Naive thymus-derived CD4-positive, alpha-beta T cell (primary cell): ENCODE measurements at regions of chr6 and their contacts with region 1.

Region 1: GRCh38 chr6:96521644-96522464 is at the start of gene UFL1:
- DNase-seq: peak; percentile 84 to 97 (median 93)
- ATAC-seq: peak; percentile 97
- H3K4me3 ChIP-seq: peak within 1 kb of the TSS; percentile 98
- H3K4me3 Mint-ChIP-seq: peak within 1 kb of the TSS; percentile 96 to 100 (median 98)
- H3K27ac ChIP-seq: peak within 1 kb of the TSS; percentile 98
- H3K27ac Mint-ChIP-seq: peak within 1 kb of the TSS; percentile 98 to 100 (median 100)
- H3K4me1 ChIP-seq: peaks cover 13 to 19% of the 10 kb centered on the region in 2 donors
- H3K4me1 Mint-ChIP-seq: peaks cover 11 to 49% (median 35%) of the 10 kb centered on the region in 7 donors
- H3K27me3 ChIP-seq: no peaks in the 10 kb centered on the region
- H3K27me3 Mint-ChIP-seq: no peaks in the 10 kb centered on the region
- total RNA-seq, gene UFL1: 15.0 to 34.9 (median 22.2) TPM

Region 2: DNA sequence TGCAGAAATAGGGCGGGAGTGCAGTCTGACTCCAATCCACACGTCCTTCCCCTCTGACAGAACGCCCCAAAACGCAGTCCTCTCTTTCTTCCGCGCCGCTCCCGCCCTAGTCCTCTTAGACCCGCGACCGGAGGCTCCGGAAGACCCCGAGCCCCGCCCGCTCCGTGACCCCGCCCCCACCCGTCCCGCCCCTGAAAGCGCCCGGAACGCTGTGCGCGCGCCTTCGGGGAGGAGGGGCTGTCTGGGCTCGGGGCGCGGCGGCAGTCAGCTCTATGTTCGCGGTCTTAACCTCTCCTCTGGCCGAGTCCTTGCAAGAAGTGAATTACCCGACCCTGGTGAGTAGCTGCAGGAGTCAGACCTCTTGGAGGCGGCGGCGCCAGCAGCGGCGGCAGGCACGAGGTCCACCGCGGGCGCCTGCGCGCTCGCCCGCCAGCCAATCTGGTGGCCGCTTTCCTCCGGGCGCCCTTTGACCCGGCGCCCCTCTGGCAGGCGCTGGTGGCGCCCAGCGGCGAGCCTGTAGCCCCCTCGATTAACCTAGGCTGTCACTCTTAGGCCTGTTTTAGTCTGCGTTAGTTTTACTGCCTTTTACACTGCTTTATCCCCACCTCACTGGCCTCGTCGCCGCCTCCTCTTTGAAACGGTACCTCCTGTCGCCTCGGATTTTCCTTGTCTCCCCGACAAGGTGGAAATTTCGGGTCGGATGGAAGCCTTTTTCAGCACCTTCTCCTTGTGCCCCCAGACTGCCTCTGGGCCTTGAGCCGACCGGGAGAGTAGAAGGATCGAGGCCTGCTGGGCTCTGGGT is 944.3 kb before region 1 on chr6 and contains the start of gene MANEA:
- CTCF ChIA-PET with region 1: no interaction called
- POLR2A ChIA-PET with region 1: interaction called, 5 read pairs
- intact Hi-C with region 1: loop called (anchors 1 kb)
- DNase-seq: peak; percentile 64 to 83 (median 79)
- ATAC-seq: peak; percentile 91
- H3K4me3 ChIP-seq: peak within 1 kb of the TSS; percentile 98
- H3K4me3 Mint-ChIP-seq: peak within 1 kb of the TSS; percentile 83 to 98 (median 96)
- H3K27ac ChIP-seq: peak within 1 kb of the TSS; percentile 80
- H3K27ac Mint-ChIP-seq: peak within 1 kb of the TSS; percentile 92 to 100 (median 97)
- H3K4me1 ChIP-seq: peaks cover 9 to 30% of the 10 kb centered on the region in 2 donors
- H3K4me1 Mint-ChIP-seq: peaks cover 28 to 71% (median 62%) of the 10 kb centered on the region in 7 donors
- H3K27me3 ChIP-seq: no peaks in the 10 kb centered on the region
- H3K27me3 Mint-ChIP-seq: no peaks in the 10 kb centered on the region
- total RNA-seq, gene MANEA: 3.8 to 25.7 (median 12.2) TPM

Region 3: DNA sequence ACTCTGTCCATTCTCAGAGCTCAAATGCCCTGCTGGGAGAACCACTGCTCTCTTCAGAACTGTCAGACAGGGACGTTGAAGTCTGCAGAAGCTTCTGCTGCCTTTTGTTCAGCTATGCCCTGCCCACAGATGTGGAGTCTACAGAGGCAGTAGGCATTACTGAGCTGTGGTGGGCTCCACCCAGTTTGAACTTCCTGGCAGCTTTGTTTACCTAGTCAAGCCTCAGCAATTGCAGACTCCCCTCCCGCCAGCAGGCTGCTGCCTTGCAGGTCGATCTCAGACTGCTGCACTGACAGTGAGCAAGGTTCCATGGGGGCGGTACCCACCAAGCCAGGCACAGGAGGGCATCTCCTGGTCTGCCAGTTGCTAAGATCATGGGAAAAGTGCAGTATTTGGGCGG is 22.1 kb before region 1 on chr6:
- CTCF ChIA-PET with region 1: no interaction called
- POLR2A ChIA-PET with region 1: no interaction called
- intact Hi-C with region 1: loop called in 1 of 2 experiments (anchors 1 kb)
- DNase-seq: peak in 7 of 9 donors; percentile 17 to 73 (median 27)
- ATAC-seq: peak; percentile 83
- H3K4me3 ChIP-seq: peak overlapping the region; percentile 36
- H3K4me3 Mint-ChIP-seq: peak overlapping the region in 3 of 10 donors; percentile 29 to 63 (median 34)
- H3K27ac ChIP-seq: no peak overlapping the region
- H3K27ac Mint-ChIP-seq: peak overlapping the region in 5 of 9 donors; percentile 23 to 88 (median 36)
- H3K4me1 ChIP-seq: peaks cover 14 to 38% of the 10 kb centered on the region in 2 donors
- H3K4me1 Mint-ChIP-seq: peaks cover 6 to 38% (median 13%) of the 10 kb centered on the region in 7 donors
- H3K27me3 ChIP-seq: no peaks in the 10 kb centered on the region
- H3K27me3 Mint-ChIP-seq: peaks cover 0 to 3% (median 0%) of the 10 kb centered on the region in 5 donors

Region 4: DNA sequence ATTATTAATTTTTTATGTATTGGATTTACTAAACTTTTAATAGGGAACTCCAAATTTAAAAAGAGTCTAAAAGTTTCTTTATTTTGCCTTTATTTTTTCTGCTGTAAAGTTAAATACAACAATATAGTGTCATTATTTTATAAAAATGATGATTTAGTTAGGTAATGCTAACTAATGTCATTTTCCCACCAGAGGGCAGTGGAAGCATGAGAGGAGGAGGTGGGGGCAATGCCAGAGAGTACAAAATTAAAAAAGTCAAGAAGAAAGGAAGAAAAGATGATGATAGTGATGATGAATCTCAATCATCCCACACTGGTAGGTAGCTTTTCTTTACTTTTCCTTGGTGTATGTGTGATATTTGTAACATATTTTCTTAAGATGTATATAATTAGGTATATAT is 20.8 kb after region 1 on chr6:
- CTCF ChIA-PET with region 1: no interaction called
- POLR2A ChIA-PET with region 1: no interaction called
- intact Hi-C with region 1: loop called in 1 of 2 experiments (anchors 2 kb)
- DNase-seq: peak in 5 of 9 donors; percentile 6 to 31 (median 11)
- ATAC-seq: no peak
- H3K4me3 ChIP-seq: no peak overlapping the region
- H3K4me3 Mint-ChIP-seq: no peak overlapping the region
- H3K27ac ChIP-seq: no peak overlapping the region
- H3K27ac Mint-ChIP-seq: peak overlapping the region in 1 of 9 donors; percentile 20
- H3K4me1 ChIP-seq: no peaks in the 10 kb centered on the region
- H3K4me1 Mint-ChIP-seq: peaks cover 0 to 4% (median 0%) of the 10 kb centered on the region in 7 donors
- H3K27me3 ChIP-seq: no peaks in the 10 kb centered on the region
- H3K27me3 Mint-ChIP-seq: no peaks in the 10 kb centered on the region

Region 5: DNA sequence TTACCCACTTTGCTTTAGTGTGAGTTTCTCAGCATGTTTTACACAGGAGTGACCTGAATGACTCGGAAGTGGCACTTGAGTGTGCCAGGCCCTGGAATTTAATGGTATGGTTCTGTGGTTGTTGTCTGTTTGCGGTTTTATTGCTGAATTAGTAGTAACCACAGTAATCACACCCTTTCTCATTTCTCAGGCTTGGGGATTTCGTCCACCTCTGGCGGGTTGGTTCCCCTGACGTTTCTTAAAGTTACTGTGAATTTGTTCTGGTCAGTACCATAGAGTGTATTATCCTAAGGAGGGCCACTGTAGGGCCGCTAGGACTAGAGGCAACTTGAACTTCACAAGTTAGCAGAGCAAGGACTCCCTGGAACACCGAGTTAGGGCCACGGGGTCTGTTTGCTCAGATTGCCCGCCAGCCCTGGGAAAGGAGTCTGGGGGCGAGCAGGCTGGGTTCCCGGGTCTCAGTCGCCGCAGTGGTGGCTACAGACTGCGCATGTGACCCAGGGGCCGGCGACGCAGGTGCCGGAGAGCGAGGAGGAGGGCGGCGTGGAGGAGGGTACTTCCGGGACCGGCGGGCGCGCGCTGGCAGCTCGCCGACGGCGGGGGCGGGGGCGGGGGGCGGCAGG is 402.1 kb after region 1 on chr6:
- CTCF ChIA-PET with region 1: no interaction called
- POLR2A ChIA-PET with region 1: interaction called, 11 read pairs
- intact Hi-C with region 1: loop called (anchors 1 kb)
- DNase-seq: peak in 1 of 9 donors; percentile 5
- ATAC-seq: peak; percentile 3
- H3K4me3 ChIP-seq: peak overlapping the region; percentile 68
- H3K4me3 Mint-ChIP-seq: peak overlapping the region; percentile 91 to 99 (median 98)
- H3K27ac ChIP-seq: peak overlapping the region; percentile 87
- H3K27ac Mint-ChIP-seq: peak overlapping the region; percentile 91 to 100 (median 99)
- H3K4me1 ChIP-seq: peaks cover 13 to 16% of the 10 kb centered on the region in 2 donors
- H3K4me1 Mint-ChIP-seq: peaks cover 8 to 50% (median 33%) of the 10 kb centered on the region in 7 donors
- H3K27me3 ChIP-seq: no peaks in the 10 kb centered on the region
- H3K27me3 Mint-ChIP-seq: peaks cover 0 to 22% (median 4%) of the 10 kb centered on the region in 5 donors

Region 6: DNA sequence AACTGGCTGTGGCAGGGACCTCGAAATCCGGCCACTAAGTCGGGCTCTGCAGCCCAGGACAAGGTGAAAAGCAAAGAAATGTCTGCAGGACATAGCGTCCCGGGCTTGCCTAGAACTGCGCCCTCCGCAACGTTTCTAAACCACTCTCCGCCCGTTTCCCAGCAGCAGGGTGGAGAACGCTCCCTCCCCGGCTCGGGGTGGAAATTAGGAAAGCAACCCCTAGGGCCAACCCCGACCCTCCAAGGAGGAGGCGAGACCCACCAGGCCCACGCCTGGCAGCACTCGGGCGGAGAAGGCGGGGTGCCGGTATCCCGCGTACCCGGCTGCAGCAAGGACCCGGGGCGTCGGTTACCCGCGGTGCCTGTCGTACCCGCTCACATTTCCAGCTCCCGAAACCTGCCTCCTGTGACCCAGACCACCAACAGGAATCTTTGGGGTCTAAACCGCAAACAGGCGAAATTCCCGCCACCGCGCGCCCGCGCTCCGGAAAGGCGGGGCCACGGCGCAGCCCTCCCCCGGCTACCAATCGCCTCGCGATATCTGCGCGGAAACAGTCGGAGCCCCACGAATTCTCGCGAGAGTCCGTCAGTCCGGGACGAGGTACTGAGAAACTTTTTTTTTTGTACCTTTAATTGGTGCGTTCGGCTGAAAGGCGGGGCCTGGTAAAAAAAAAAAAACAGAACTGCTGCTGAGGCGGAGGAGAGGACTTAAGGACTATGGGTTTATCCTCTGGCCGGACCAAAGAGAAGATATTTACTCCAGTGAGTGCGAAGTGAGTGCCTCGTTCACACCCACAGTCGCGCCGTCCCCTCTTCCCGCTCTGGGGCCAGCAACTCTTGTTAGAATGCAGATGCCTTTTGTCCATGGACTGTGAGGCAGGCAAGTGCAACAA is 761.1 kb after region 1 on chr6 and contains the start of gene MMS22L:
- CTCF ChIA-PET with region 1: no interaction called
- POLR2A ChIA-PET with region 1: no interaction called
- intact Hi-C with region 1: loop called (anchors 1 kb)
- DNase-seq: peak; percentile 83 to 93 (median 90)
- ATAC-seq: peak; percentile 99
- H3K4me3 ChIP-seq: peak within 1 kb of the TSS; percentile 90
- H3K4me3 Mint-ChIP-seq: peak within 1 kb of the TSS; percentile 90 to 98 (median 96)
- H3K27ac ChIP-seq: peak within 1 kb of the TSS; percentile 70
- H3K27ac Mint-ChIP-seq: peak within 1 kb of the TSS; percentile 83 to 96 (median 89)
- H3K4me1 ChIP-seq: peaks cover 0 to 16% of the 10 kb centered on the region in 2 donors
- H3K4me1 Mint-ChIP-seq: peaks cover 5 to 37% (median 24%) of the 10 kb centered on the region in 7 donors
- H3K27me3 ChIP-seq: no peaks in the 10 kb centered on the region
- H3K27me3 Mint-ChIP-seq: peaks cover 0 to 8% (median 0%) of the 10 kb centered on the region in 5 donors
- total RNA-seq, gene MMS22L: 11.8 to 48.1 (median 12.9) TPM